B cell (primary cell): ENCODE measurements at regions of chr7 and their contacts with region 1.

Region 1: GRCh38 chr7:152025077-152025936 is at the start of gene GALNT11:
- DNase-seq: peak; percentile 94
- ATAC-seq: peak; percentile 92
- H3K4me3 ChIP-seq: peak within 1 kb of the TSS; percentile 49 to 82 (median 72)
- H3K4me3 Mint-ChIP-seq: peak within 1 kb of the TSS; percentile 89
- H3K27ac ChIP-seq: peak within 1 kb of the TSS; percentile 65 to 82
- H3K27ac Mint-ChIP-seq: peak within 1 kb of the TSS; percentile 80
- H3K4me1 ChIP-seq: peaks cover 6 to 14% of the 10 kb centered on the region in 2 donors
- H3K4me1 Mint-ChIP-seq: peaks cover 16% of the 10 kb centered on the region
- H3K27me3 ChIP-seq: peaks cover 0 to 3% (median 0%) of the 10 kb centered on the region in 4 experiments
- H3K27me3 Mint-ChIP-seq: no peaks in the 10 kb centered on the region
- CTCF ChIP-seq: peak; percentile 41
- total RNA-seq, gene GALNT11: 14.5 and 15.2 TPM in 2 replicates

Region 2: GRCh38 chr7:151351027-151351426 is 674.3 kb before region 1 on chr7:
- CTCF ChIA-PET with region 1: no interaction called
- POLR2A ChIA-PET with region 1: no interaction called
- intact Hi-C with region 1: loop called (anchors 5 kb)
- DNase-seq: peak; percentile 47
- ATAC-seq: no peak
- H3K4me3 ChIP-seq: no peak overlapping the region
- H3K4me3 Mint-ChIP-seq: peak overlapping the region; percentile 56
- H3K27ac ChIP-seq: peak overlapping the region; percentile 82 to 99
- H3K27ac Mint-ChIP-seq: peak overlapping the region; percentile 76
- H3K4me1 ChIP-seq: peaks cover 36 to 41% of the 10 kb centered on the region in 2 donors
- H3K4me1 Mint-ChIP-seq: peaks cover 46% of the 10 kb centered on the region
- H3K27me3 ChIP-seq: no peaks in the 10 kb centered on the region
- H3K27me3 Mint-ChIP-seq: no peaks in the 10 kb centered on the region
- CTCF ChIP-seq: no peak

Region 3: DNA sequence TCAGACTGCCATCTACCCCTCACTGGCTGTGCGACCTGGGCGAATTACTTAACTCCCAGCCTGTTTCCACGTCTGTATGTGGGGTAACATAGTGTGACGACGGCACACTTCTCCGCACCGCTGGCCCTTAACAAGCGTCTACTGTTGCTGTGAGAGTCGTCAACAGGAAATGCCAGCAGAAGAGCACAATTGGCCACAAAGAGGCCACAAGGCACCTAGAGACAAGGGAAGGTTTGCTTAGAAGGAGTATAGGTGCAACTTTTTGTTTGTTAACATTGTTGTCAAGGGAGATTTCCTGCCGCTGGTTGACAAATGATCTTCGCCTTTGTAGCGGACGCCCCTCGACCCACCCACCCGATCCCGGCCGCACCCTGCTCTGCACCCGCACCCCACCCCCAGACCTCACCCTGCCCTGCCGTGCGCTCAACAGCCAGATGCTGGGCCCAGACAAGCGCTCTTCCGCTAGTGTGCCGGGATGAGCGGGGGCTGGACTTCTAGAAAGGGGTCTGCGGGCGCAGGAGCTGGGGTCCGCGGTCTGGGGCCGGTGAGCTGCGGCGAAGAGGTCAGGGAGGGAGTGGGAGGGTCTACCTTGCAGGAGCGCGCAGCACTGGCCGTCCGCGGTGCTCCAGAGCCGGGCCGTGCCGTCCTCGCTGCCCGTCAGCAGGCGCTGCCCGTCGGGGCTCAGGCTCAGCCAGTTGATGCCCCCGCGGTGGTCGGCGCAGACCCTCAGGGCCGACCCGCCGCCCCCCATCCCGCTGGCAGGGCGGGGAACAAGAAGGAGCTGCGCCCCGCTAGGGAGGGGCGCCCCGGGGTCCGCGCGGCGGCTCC is 616.3 kb before region 1 on chr7:
- CTCF ChIA-PET with region 1: no interaction called
- POLR2A ChIA-PET with region 1: no interaction called
- intact Hi-C with region 1: no loop called
- DNase-seq: peak; percentile 87
- ATAC-seq: peak; percentile 79
- H3K4me3 ChIP-seq: peak overlapping the region in 4 of 5 experiments; percentile 15 to 29 (median 26)
- H3K4me3 Mint-ChIP-seq: peak overlapping the region; percentile 88
- H3K27ac ChIP-seq: no peak overlapping the region
- H3K27ac Mint-ChIP-seq: peak overlapping the region; percentile 67
- H3K4me1 ChIP-seq: peaks cover 34% of the 10 kb centered on the region in 2 donors
- H3K4me1 Mint-ChIP-seq: peaks cover 28% of the 10 kb centered on the region
- H3K27me3 ChIP-seq: peaks cover 0 to 60% (median 26%) of the 10 kb centered on the region in 4 experiments
- H3K27me3 Mint-ChIP-seq: peaks cover 42% of the 10 kb centered on the region
- CTCF ChIP-seq: peak; percentile 24

Region 4: DNA sequence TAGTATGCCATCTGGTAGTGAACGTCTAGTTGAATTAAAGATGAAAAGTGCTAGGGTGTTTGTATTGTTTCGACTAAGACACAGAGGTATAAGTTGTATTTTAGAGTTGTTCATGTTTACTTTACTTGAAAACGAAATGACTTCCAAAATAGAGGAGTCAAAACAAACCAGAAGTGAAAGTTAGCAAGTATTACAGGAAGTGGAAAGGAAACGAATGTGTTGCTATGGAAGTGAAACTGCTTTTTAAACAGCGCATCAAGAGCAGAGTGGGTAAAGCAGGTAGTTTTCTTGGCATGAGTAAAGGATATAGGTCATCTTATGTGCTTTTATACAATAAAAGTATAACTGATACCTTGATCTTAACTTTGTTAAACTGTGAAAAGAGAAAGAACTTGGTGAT is 89.1 kb before region 1 on chr7:
- CTCF ChIA-PET with region 1: no interaction called
- POLR2A ChIA-PET with region 1: no interaction called
- intact Hi-C with region 1: loop called (anchors 1 kb)
- DNase-seq: peak; percentile 82
- ATAC-seq: peak; percentile 81
- H3K4me3 ChIP-seq: peak overlapping the region in 3 of 5 experiments; percentile 6 to 48 (median 38)
- H3K4me3 Mint-ChIP-seq: peak overlapping the region; percentile 94
- H3K27ac ChIP-seq: peak overlapping the region; percentile 70 to 82
- H3K27ac Mint-ChIP-seq: peak overlapping the region; percentile 99
- H3K4me1 ChIP-seq: peaks cover 33 to 37% of the 10 kb centered on the region in 2 donors
- H3K4me1 Mint-ChIP-seq: peaks cover 39% of the 10 kb centered on the region
- H3K27me3 ChIP-seq: no peaks in the 10 kb centered on the region
- H3K27me3 Mint-ChIP-seq: peaks cover 4% of the 10 kb centered on the region
- CTCF ChIP-seq: no peak

Region 5: GRCh38 chr7:152231089-152231488 is 205.8 kb after region 1 on chr7:
- CTCF ChIA-PET with region 1: no interaction called
- POLR2A ChIA-PET with region 1: interaction called, 14 read pairs
- intact Hi-C with region 1: no loop called
- DNase-seq: no peak
- ATAC-seq: no peak
- H3K4me3 ChIP-seq: no peak overlapping the region
- H3K4me3 Mint-ChIP-seq: no peak overlapping the region
- H3K27ac ChIP-seq: no peak overlapping the region
- H3K27ac Mint-ChIP-seq: no peak overlapping the region
- H3K4me1 ChIP-seq: no peaks in the 10 kb centered on the region
- H3K4me1 Mint-ChIP-seq: peaks cover 7% of the 10 kb centered on the region
- H3K27me3 ChIP-seq: no peaks in the 10 kb centered on the region
- H3K27me3 Mint-ChIP-seq: no peaks in the 10 kb centered on the region
- CTCF ChIP-seq: no peak

Region 6: GRCh38 chr7:152675759-152676636 is 650.7 kb after region 1 on chr7 and contains the start of gene XRCC2:
- CTCF ChIA-PET with region 1: no interaction called
- POLR2A ChIA-PET with region 1: no interaction called
- intact Hi-C with region 1: loop called (anchors 5 kb)
- DNase-seq: peak; percentile 97
- ATAC-seq: peak; percentile 91
- H3K4me3 ChIP-seq: peak within 1 kb of the TSS; percentile 55 to 96 (median 77)
- H3K4me3 Mint-ChIP-seq: peak within 1 kb of the TSS; percentile 96
- H3K27ac ChIP-seq: peak within 1 kb of the TSS; percentile 58 to 90
- H3K27ac Mint-ChIP-seq: peak within 1 kb of the TSS; percentile 87
- H3K4me1 ChIP-seq: peaks cover 7 to 11% of the 10 kb centered on the region in 2 donors
- H3K4me1 Mint-ChIP-seq: peaks cover 11% of the 10 kb centered on the region
- H3K27me3 ChIP-seq: no peaks in the 10 kb centered on the region
- H3K27me3 Mint-ChIP-seq: no peaks in the 10 kb centered on the region
- CTCF ChIP-seq: no peak
- total RNA-seq, gene XRCC2: 1.2 and 1.5 TPM in 2 replicates